HAP-1 (cell line): ENCODE measurements at regions of chr18 and their contacts with region 1.

Region 1: DNA sequence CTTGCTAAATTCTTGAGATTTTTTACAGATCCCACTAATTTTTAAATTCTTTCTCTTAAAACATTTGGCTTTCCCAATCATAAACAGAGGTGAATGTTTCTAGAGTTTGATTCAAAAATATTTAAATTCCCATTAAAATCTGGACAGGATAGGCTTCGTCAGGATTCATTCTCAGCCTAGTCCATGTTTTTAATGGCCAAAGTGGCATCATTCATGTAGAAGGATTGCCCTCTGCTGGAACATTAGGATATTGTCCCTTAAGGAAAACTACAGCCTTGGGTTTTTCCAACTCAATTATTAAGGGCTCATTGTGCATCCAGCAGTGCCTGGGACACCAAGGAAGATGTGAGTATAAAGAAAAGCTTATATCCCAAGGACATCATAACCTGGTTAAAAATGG is 71.7 kb downstream of the TPGS2 start:
- DNase-seq: peak in 1 of 2 experiments; percentile 53
- H3K4me3 ChIP-seq: no peak overlapping the region
- H3K4me1 ChIP-seq: no peaks in the 10 kb centered on the region
- H3K27me3 ChIP-seq: no peaks in the 10 kb centered on the region

Region 2: GRCh38 chr18:36095936-36096519 is 661.1 kb before region 1 on chr18:
- in situ Hi-C with region 1: loop called (anchors 25 kb)
- DNase-seq: peak in 1 of 2 experiments; percentile 64
- H3K4me3 ChIP-seq: no peak overlapping the region
- H3K4me1 ChIP-seq: peaks cover 4% of the 10 kb centered on the region; the same call in 1 of the 2 replicates
- H3K27me3 ChIP-seq: no peaks in the 10 kb centered on the region

Region 3: DNA sequence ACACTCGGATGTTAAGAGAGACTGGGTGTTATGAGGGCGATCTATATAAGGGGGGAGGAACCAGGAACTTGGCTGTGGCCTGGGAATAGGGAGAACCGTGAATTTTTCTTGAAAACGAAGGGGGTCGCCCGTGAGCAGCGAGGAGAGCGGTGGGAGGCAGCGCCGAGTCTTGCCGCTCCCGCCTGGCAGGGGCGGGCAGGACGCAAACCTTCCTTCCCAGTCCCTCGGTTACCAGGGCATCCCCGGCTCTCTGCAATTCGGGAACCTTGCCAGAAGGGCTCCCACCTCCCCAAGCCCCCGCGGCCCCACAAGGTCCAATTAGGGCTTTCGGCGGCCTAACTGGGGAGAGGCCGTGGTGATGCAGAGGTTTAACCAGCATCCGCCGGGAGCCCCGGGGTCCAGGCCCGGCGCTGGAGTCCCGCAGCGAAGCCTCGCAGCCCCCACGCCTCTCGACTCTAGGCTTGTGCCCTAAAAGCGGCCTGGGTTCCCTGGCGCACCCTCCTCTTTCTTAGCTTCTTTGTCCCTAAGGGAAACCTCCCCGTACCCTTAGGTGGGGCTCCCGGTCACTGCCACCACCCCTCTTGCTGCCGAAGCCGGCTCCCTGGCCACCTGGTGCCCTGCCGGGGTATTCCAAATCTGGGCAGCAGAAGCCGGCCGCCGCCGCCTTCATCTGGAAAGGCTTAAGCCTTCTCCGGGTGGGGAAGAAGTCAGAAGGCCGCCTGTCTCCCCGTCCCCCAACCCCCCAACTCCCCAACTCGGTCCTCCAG is 460.2 kb before region 1 on chr18:
- in situ Hi-C with region 1: loop called (anchors 25 kb)
- DNase-seq: peak; percentile 80 to 90
- H3K4me3 ChIP-seq: peak overlapping the region; percentile 57
- H3K4me1 ChIP-seq: no peaks in the 10 kb centered on the region; the same call in 1 of the 2 replicates
- H3K27me3 ChIP-seq: no peaks in the 10 kb centered on the region